CD4-positive, alpha-beta memory T cell (primary cell): ENCODE measurements at regions of chr15 and their contacts with region 1.

Region 1: DNA sequence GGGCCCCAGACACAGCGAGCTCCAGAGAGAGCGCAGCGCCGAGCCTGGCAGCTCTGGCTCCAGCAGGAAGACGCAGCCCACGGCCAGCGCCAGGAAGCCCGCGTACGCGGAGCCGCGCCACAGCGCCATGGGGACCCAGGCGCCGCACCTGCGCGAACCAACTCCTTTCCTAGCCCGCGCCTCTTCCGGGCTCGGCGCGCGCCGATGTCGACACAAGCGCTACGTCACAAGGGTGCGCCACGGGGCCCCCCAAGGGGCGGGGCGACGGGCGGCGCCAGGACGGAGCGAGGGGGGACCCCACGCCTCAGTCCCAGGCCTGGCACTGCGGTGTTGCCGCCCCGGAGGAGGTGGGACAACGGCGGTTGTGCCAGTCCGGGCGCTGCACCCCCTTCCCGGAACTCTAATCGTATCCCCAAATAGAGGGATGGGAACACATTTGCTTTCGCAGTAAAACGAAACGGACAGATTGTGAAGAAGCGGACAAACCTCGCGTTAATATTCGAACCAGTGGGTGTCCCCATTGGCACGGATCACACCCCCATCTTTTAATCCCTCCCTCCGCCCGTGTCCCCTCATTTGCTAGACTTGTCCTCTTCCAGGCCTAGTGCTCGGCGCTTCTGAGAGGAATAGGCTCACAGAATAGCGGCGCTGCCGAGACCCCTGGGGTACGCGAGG is at the start of gene ADPGK:
- DNase-seq: peak; percentile 92 to 100 (median 97)
- H3K4me3 ChIP-seq: peak within 1 kb of the TSS; percentile 36 to 96
- H3K4me3 Mint-ChIP-seq: peak within 1 kb of the TSS; percentile 95 to 99 (median 97)
- H3K27ac ChIP-seq: peak within 1 kb of the TSS; percentile 87
- H3K27ac Mint-ChIP-seq: peak within 1 kb of the TSS; percentile 90 to 100 (median 98)
- H3K4me1 ChIP-seq: peaks cover 62% of the 10 kb centered on the region
- H3K4me1 Mint-ChIP-seq: peaks cover 44 to 74% (median 56%) of the 10 kb centered on the region in 4 donors
- H3K27me3 ChIP-seq: no peaks in the 10 kb centered on the region
- H3K27me3 Mint-ChIP-seq: no peaks in the 10 kb centered on the region
- total RNA-seq, gene ADPGK: 98.1 to 104 TPM

Region 2: GRCh38 chr15:72375847-72376581 is 407.7 kb before region 1 on chr15 and contains the start of gene HEXA:
- CTCF ChIA-PET with region 1: no interaction called
- POLR2A ChIA-PET with region 1: interaction called, 9 read pairs
- intact Hi-C with region 1: loop called (anchors 5 kb)
- DNase-seq: peak; percentile 95 to 96 (median 96)
- H3K4me3 ChIP-seq: peak within 1 kb of the TSS; percentile 45 to 95
- H3K4me3 Mint-ChIP-seq: peak within 1 kb of the TSS; percentile 89 to 99 (median 94)
- H3K27ac ChIP-seq: peak within 1 kb of the TSS; percentile 79
- H3K27ac Mint-ChIP-seq: peak within 1 kb of the TSS; percentile 93 to 99 (median 98)
- H3K4me1 ChIP-seq: peaks cover 39% of the 10 kb centered on the region
- H3K4me1 Mint-ChIP-seq: peaks cover 35 to 70% (median 49%) of the 10 kb centered on the region in 4 donors
- H3K27me3 ChIP-seq: no peaks in the 10 kb centered on the region
- H3K27me3 Mint-ChIP-seq: no peaks in the 10 kb centered on the region
- total RNA-seq, gene HEXA: 84.4 to 84.6 TPM

Region 3: DNA sequence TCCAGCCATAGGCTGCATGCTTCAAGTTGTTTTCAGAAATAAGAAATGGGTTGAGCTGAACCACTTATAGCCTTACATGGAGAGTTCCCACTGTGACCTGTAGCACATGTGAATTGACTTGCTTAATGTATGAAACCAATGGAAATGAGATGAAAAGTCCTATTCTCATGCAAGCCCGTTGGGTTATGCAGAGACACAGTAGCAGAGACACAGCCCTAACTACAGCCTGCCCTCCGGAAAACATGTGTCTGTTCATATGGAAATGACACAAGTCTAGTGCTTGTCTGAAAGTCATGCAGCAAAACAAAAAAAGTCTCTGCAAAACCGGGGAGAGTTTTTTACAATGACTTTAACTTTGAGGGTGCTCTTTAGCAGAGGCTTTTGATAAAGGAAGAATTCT is 112.2 kb before region 1 on chr15:
- CTCF ChIA-PET with region 1: no interaction called
- POLR2A ChIA-PET with region 1: no interaction called
- intact Hi-C with region 1: no loop called
- DNase-seq: no peak
- H3K4me3 ChIP-seq: no peak overlapping the region
- H3K4me3 Mint-ChIP-seq: no peak overlapping the region
- H3K27ac ChIP-seq: no peak overlapping the region
- H3K27ac Mint-ChIP-seq: no peak overlapping the region
- H3K4me1 ChIP-seq: peaks cover 4% of the 10 kb centered on the region
- H3K4me1 Mint-ChIP-seq: peaks cover 0 to 4% (median under 1%) of the 10 kb centered on the region in 4 donors
- H3K27me3 ChIP-seq: no peaks in the 10 kb centered on the region
- H3K27me3 Mint-ChIP-seq: peaks cover 7 to 13% of the 10 kb centered on the region in 2 donors

Region 4: DNA sequence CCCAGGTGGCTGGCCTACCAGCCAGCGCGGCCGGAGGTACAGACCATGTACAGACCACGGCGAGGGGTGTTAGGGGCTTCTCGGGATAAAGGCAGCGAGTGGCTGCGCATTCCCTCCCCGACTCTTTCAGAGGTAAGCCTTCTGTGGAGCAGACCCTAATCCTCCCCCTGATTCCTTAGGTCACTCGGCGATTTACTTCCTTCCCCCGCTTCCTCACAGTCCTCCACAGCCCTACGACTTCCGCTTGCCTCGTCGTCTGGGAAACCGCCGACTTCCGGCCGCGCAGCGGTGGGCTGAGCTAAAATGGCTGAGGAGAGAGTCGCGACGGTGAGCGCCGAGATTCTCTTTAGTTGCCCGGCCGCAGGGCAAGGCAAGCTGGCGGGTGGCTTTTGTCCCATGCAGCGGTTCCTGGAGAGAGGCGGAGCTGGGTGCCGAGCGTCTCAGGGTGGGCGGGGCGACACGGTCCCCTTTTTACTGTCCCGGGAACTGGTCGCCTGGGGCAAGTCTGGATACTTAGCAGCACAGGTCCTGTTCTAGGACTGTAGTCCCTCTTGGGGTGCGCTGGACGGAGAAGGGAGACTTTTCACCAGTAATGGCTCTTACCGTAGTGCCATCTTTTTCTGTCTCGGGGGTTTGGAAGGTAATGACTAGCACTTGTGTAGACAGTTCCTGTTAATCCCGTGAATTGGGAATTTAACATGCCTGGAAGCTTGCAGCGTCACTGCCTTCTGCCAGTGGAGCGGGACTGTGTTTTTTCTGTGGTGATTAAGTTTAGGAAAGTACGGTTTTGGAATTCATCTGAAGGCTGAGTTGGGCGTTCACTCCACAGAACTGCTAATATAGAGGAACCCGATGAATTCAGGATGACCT is 97.5 kb before region 1 on chr15 and contains the starts of genes BBS4 and HIGD2B:
- CTCF ChIA-PET with region 1: no interaction called
- POLR2A ChIA-PET with region 1: interaction called, 3 read pairs
- intact Hi-C with region 1: loop called (anchors 1 kb)
- DNase-seq: peak; percentile 81 to 86 (median 83)
- H3K4me3 ChIP-seq: peak within 1 kb of the TSS; percentile 95 to 97
- H3K4me3 Mint-ChIP-seq: peak within 1 kb of the TSS; percentile 94 to 99 (median 98)
- H3K27ac ChIP-seq: peak within 1 kb of the TSS; percentile 76
- H3K27ac Mint-ChIP-seq: peak within 1 kb of the TSS; percentile 88 to 99 (median 97)
- H3K4me1 ChIP-seq: peaks cover 15% of the 10 kb centered on the region
- H3K4me1 Mint-ChIP-seq: peaks cover 10 to 21% (median 16%) of the 10 kb centered on the region in 4 donors
- H3K27me3 ChIP-seq: no peaks in the 10 kb centered on the region
- H3K27me3 Mint-ChIP-seq: no peaks in the 10 kb centered on the region
- total RNA-seq, gene BBS4: 19.1 to 22.2 TPM
- total RNA-seq, gene HIGD2B: 0.39 to 0.41 TPM

Region 5: DNA sequence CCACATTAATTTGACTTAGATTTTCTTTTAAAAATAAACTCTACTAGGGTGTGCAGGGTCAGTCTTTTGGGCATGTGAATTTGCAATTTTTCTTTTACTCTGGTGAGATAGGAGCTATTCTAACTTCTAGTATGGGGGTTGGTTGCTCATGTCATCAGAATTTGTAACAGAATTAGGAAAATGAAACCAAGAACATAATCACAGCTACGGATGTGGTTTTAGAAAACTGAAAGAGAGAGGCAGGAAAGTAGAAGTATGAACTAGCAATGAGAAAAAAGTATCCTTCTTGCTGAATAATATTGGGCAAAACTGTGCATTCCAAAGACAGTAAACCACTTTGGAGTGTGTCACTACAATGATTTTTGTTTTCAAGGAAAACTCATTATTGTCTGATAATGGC is 43.5 kb before region 1 on chr15:
- CTCF ChIA-PET with region 1: no interaction called
- POLR2A ChIA-PET with region 1: interaction called, 5 read pairs
- intact Hi-C with region 1: loop called (anchors 1 kb)
- DNase-seq: peak in 4 of 5 donors; percentile 9 to 46 (median 42)
- H3K4me3 ChIP-seq: peak overlapping the region in 1 of 2 donors; percentile 20
- H3K4me3 Mint-ChIP-seq: peak overlapping the region; percentile 32 to 83 (median 70)
- H3K27ac ChIP-seq: peak overlapping the region; percentile 39
- H3K27ac Mint-ChIP-seq: peak overlapping the region; percentile 41 to 89 (median 84)
- H3K4me1 ChIP-seq: peaks cover 29% of the 10 kb centered on the region
- H3K4me1 Mint-ChIP-seq: peaks cover 28 to 37% (median 32%) of the 10 kb centered on the region in 4 donors
- H3K27me3 ChIP-seq: no peaks in the 10 kb centered on the region
- H3K27me3 Mint-ChIP-seq: no peaks in the 10 kb centered on the region

Region 6: DNA sequence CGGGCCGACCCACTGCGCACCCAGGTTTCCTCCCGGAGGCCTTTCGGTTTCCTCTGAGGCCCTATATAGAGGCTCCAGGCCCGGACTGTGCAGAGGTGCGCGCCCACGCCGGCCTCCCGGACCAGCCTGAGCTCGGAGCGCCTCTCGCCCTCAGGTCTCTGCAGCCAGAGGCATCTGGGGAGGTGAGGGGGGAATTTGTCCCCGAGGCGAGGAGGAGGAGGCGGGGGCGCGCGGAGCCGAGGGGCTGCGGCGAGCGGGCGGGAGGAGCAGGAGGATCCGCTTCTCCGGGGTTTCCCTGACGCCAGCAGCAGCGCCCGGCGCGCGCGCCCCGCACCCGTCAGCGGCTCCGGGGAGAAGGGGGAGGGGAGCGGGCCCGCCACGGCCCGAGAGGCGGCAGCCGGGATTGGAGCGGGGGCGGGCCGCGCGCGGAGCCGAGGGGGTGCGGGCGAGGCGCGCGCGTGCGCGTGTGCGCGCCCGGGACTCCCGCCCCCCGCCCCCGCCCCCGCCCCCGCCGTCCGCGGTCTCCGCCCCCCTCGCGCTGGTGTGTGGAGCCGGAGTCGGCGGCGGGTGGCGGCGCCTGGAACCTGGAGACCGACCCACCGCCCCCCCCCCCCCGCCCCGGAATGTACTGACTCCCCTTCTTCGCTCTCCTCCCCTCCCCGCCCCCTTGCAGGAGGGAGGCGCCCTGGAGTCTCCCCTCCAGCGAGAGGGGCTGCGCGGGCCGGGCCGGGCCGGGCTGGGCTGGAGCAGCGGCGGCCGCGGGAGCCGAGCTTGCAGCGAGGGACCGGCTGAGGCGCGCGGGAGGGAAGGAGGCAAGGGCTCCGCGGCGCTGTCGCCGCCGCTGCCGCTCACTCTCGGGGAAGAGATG is 268.3 kb after region 1 on chr15 and contains the start of gene NEO1:
- CTCF ChIA-PET with region 1: no interaction called
- POLR2A ChIA-PET with region 1: interaction called, 4 read pairs
- intact Hi-C with region 1: loop called (anchors 1 kb)
- DNase-seq: peak; percentile 87 to 89 (median 87)
- H3K4me3 ChIP-seq: peak within 1 kb of the TSS; percentile 31 to 67
- H3K4me3 Mint-ChIP-seq: peak within 1 kb of the TSS; percentile 87 to 91 (median 90)
- H3K27ac ChIP-seq: peak within 1 kb of the TSS; percentile 73
- H3K27ac Mint-ChIP-seq: peak within 1 kb of the TSS; percentile 74 to 93 (median 84)
- H3K4me1 ChIP-seq: peaks cover 11% of the 10 kb centered on the region
- H3K4me1 Mint-ChIP-seq: peaks cover 9 to 14% (median 11%) of the 10 kb centered on the region in 4 donors
- H3K27me3 ChIP-seq: no peaks in the 10 kb centered on the region
- H3K27me3 Mint-ChIP-seq: no peaks in the 10 kb centered on the region
- total RNA-seq, gene NEO1: 11.3 to 15.7 TPM

Region 7: GRCh38 chr15:73265536-73266153 is 481.9 kb after region 1 on chr15:
- CTCF ChIA-PET with region 1: no interaction called
- POLR2A ChIA-PET with region 1: interaction called, 3 read pairs
- intact Hi-C with region 1: loop called (anchors 1 kb)
- DNase-seq: peak; percentile 38 to 56 (median 44)
- H3K4me3 ChIP-seq: no peak overlapping the region
- H3K4me3 Mint-ChIP-seq: no peak overlapping the region
- H3K27ac ChIP-seq: no peak overlapping the region
- H3K27ac Mint-ChIP-seq: peak overlapping the region in 1 of 7 donors; percentile 69
- H3K4me1 ChIP-seq: no peaks in the 10 kb centered on the region
- H3K4me1 Mint-ChIP-seq: peaks cover 0 to 9% (median 7%) of the 10 kb centered on the region in 4 donors
- H3K27me3 ChIP-seq: no peaks in the 10 kb centered on the region
- H3K27me3 Mint-ChIP-seq: no peaks in the 10 kb centered on the region